ENCODE measurements at regions of chr5 and their contacts with region 1.

Region 1: GRCh38 chr5:181181650-181182565 is 23.1 kb downstream of the TRIM7 start:
- DNase-seq: no peak
- ATAC-seq: peak; percentile 83
- H3K4me3 ChIP-seq: no peak overlapping the region
- H3K27ac ChIP-seq: no peak overlapping the region
- H3K4me1 ChIP-seq: peaks cover 12% of the 10 kb centered on the region
- H3K27me3 ChIP-seq: no peaks in the 10 kb centered on the region
- CTCF ChIP-seq: peak; percentile 91

Region 2: GRCh38 chr5:179827680-179828079 is 1354.2 kb before region 1 on chr5:
- CTCF ChIA-PET with region 1: interaction called, 16 read pairs
- POLR2A ChIA-PET with region 1: no interaction called
- in situ Hi-C with region 1: no loop called
- intact Hi-C with region 1: no loop called
- DNase-seq: no peak
- ATAC-seq: peak; percentile 65
- H3K4me3 ChIP-seq: no peak overlapping the region
- H3K27ac ChIP-seq: peak overlapping the region; percentile 49
- H3K4me1 ChIP-seq: peaks cover 69% of the 10 kb centered on the region
- H3K27me3 ChIP-seq: no peaks in the 10 kb centered on the region
- CTCF ChIP-seq: no peak

Region 3: GRCh38 chr5:180809403-180810209 is 372.3 kb before region 1 on chr5:
- CTCF ChIA-PET with region 1: no interaction called
- POLR2A ChIA-PET with region 1: no interaction called
- in situ Hi-C with region 1: no loop called
- intact Hi-C with region 1: loop called (anchors 10 kb)
- DNase-seq: peak; percentile 73
- ATAC-seq: peak; percentile 86
- H3K4me3 ChIP-seq: peak overlapping the region; percentile 64 to 89
- H3K27ac ChIP-seq: peak overlapping the region; percentile 97
- H3K4me1 ChIP-seq: peaks cover 49% of the 10 kb centered on the region
- H3K27me3 ChIP-seq: no peaks in the 10 kb centered on the region
- CTCF ChIP-seq: no peak

Region 4: GRCh38 chr5:180860887-180861822 is 320.8 kb before region 1 on chr5 and contains the start of gene ZFP62:
- CTCF ChIA-PET with region 1: interaction called, 15 read pairs
- POLR2A ChIA-PET with region 1: no interaction called
- in situ Hi-C with region 1: no loop called
- intact Hi-C with region 1: no loop called
- DNase-seq: peak; percentile 48
- ATAC-seq: peak; percentile 98
- H3K4me3 ChIP-seq: peak within 1 kb of the TSS; percentile 74 to 80
- H3K27ac ChIP-seq: peak within 1 kb of the TSS; percentile 93
- H3K4me1 ChIP-seq: peaks cover 7% of the 10 kb centered on the region; the same call in 1 of the 2 replicates
- H3K27me3 ChIP-seq: no peaks in the 10 kb centered on the region
- CTCF ChIP-seq: peak; percentile 10
- total RNA-seq, gene ZFP62: 17.8 TPM

Region 5: DNA sequence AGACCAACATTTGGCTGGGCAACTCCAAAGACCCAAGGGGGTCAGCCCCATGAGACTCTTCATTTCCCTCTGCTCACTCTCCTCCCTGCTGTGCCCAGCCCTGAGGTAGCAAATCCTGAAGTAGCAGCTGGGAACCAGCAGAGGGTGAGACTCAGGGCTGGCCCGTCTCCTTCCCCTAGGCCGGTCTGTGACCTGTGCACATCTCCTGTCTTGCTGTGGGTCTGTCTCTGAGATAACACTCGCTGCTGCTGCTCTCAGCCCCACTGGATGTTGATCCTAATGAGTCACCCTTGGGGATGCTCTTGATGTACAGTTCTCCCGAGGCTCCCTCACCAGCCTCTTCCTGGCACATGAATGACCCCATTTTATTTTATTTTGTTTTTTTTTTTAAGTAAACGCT is 43.6 kb before region 1 on chr5:
- CTCF ChIA-PET with region 1: no interaction called
- POLR2A ChIA-PET with region 1: no interaction called
- in situ Hi-C with region 1: no loop called
- intact Hi-C with region 1: no loop called
- DNase-seq: no peak
- ATAC-seq: peak; percentile 64
- H3K4me3 ChIP-seq: no peak overlapping the region
- H3K27ac ChIP-seq: no peak overlapping the region
- H3K4me1 ChIP-seq: peaks cover 9% of the 10 kb centered on the region
- H3K27me3 ChIP-seq: no peaks in the 10 kb centered on the region
- CTCF ChIP-seq: no peak